Uterus (tissue), 4 donors: ENCODE measurements at regions of chr4 and their contacts with region 1.

Region 1: GRCh38 chr4:6938237-6938636 is 28.6 kb downstream of the TBC1D14 start:
- DNase-seq: no peak
- H3K4me3 ChIP-seq: no peak overlapping the region
- H3K27ac ChIP-seq: no peak overlapping the region
- H3K4me1 ChIP-seq: peaks cover 0 to 8% of the 10 kb centered on the region in 2 donors
- H3K27me3 ChIP-seq: no peaks in the 10 kb centered on the region
- CTCF ChIP-seq: no peak
- POLR2A ChIP-seq: no peak

Region 2: DNA sequence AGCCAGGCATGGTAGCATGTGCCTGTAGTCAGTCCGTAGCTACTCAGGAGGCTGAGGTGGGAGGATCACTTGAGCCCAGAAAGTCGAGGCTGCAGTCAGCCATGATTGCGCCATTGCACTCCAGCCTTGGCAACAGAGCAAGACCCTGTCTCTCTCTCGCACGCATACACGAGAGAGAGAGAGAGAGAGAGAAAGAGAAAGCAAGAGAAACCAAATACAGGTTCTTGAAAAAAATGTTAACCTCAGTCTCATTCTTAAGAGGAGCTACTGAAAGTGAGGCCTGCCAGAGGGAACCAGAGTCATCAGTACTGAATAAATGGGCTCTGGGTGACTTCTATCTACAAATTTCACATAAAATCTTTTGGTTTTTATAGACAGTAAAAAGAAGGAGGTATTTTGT is 112.8 kb before region 1 on chr4:
- intact Hi-C with region 1: no loop called
- DNase-seq: no peak
- H3K4me3 ChIP-seq: no peak overlapping the region
- H3K27ac ChIP-seq: no peak overlapping the region
- H3K4me1 ChIP-seq: no peaks in the 10 kb centered on the region
- H3K27me3 ChIP-seq: no peaks in the 10 kb centered on the region
- CTCF ChIP-seq: no peak
- POLR2A ChIP-seq: no peak

Region 3: GRCh38 chr4:7328898-7329638 is 390.8 kb after region 1 on chr4:
- intact Hi-C with region 1: loop called (anchors 10 kb)
- DNase-seq: no peak
- H3K4me3 ChIP-seq: no peak overlapping the region
- H3K27ac ChIP-seq: no peak overlapping the region
- H3K4me1 ChIP-seq: peaks cover 0 to 4% of the 10 kb centered on the region in 2 donors
- H3K27me3 ChIP-seq: no peaks in the 10 kb centered on the region
- CTCF ChIP-seq: no peak
- POLR2A ChIP-seq: no peak